ENCODE measurements at regions of chr1 and their contacts with region 1.

Region 1: DNA sequence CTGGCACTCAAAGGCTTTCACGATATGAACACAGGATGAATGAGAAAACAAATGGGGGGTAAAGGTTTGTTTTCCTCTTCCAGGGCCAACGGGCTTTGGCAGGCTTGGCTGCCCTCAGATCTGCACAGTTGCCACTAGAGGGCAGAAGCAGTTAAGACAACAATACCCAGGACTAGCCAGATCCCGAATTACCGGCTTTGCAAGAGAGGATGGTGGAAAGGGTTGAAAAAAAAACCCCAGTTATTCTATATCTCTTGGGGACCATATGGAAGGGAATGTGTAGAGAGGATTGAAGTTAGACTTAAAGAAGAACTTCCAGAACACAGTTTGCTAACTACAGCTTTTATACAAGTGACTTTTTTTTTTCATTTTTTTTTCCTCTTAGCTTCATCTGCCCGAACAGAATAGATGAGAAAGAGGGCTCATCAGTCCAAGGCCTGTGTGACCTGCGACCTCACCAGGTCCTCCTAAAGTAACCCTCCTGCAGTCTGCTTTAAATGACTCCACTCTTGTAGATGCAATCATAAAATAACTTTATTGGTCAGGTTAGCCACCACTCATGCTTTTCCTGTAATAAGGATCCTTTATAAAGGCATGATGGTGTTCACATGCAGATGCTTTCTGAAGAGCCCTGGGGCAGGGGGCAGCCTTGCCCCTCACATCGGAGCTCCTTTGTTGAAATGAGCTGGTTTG is 10.7 kb downstream of the FMOD start:
- DNase-seq: peak; percentile 79 to 92
- ATAC-seq: peak; percentile 79 to 89; a peak in 5 of 6 replicates
- H3K4me3 ChIP-seq: no peak overlapping the region
- H3K27ac ChIP-seq: no peak overlapping the region
- H3K4me1 ChIP-seq: no peaks in the 10 kb centered on the region
- CTCF ChIP-seq: peak; percentile 90
- EP300 ChIP-seq: no peak
- POLR2A ChIP-seq: no peak
- RAD21 ChIP-seq: peak; percentile 89 to 91

Region 2: DNA sequence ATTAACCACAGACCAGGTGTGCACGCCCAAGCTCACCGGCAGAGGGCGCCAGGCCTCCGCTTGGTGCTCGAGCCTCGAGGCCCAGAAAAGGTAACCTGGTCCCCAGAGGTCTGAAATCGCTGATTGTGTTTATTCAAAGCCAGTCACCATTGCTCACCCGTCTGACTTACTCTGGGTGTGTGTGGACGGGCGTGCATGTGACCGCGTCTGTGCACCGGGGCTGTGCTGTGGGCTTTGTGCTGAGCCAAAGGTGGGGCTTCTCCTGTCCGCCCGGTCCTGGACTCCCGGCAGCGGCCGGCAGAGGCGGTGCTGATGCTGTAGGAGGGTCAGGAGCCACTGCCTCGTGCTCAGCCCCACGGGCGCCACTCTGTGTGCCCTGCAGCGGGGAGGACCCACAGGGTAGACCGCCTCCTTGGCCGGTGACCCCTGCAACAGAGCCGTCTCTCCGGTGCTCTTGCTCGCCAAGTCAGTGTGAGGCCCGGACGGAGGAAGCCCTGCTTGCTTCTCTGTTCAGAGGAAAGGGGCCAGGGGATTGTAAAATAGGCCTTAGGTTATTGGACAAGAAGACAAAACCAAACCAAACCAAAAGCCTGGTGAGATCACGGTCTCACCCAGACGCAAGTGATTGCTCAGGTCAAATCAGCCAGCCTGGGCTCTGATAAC is 66.9 kb before region 1 on chr1:
- CTCF ChIA-PET with region 1: interaction called, 510 read pairs
- POLR2A ChIA-PET with region 1: no interaction called
- DNase-seq: peak; percentile 73 to 82
- ATAC-seq: peak; percentile 73 to 88
- H3K4me3 ChIP-seq: no peak overlapping the region
- H3K27ac ChIP-seq: peak overlapping the region; percentile 29 to 67; a peak in 4 of 6 replicates
- H3K4me1 ChIP-seq: peaks cover 9% of the 10 kb centered on the region
- CTCF ChIP-seq: peak; percentile 97
- EP300 ChIP-seq: no peak
- POLR2A ChIP-seq: no peak
- RAD21 ChIP-seq: peak; percentile 93 to 95

Region 3: GRCh38 chr1:203320591-203321272 is 19.5 kb before region 1 on chr1:
- CTCF ChIA-PET with region 1: interaction called, 77 read pairs
- POLR2A ChIA-PET with region 1: no interaction called
- DNase-seq: no peak
- ATAC-seq: no peak
- H3K4me3 ChIP-seq: no peak overlapping the region
- H3K27ac ChIP-seq: no peak overlapping the region
- H3K4me1 ChIP-seq: no peaks in the 10 kb centered on the region
- CTCF ChIP-seq: no peak
- EP300 ChIP-seq: no peak
- POLR2A ChIP-seq: no peak
- RAD21 ChIP-seq: no peak

Region 4: GRCh38 chr1:203351037-203352013 is 11.1 kb after region 1 on chr1 and contains the start of gene FMOD:
- CTCF ChIA-PET with region 1: interaction called, 223 read pairs
- POLR2A ChIA-PET with region 1: no interaction called
- DNase-seq: no peak
- ATAC-seq: peak; percentile 62 to 74; a peak in 3 of 6 replicates
- H3K4me3 ChIP-seq: no peak within 1 kb of the TSS
- H3K27ac ChIP-seq: no peak within 1 kb of the TSS
- H3K4me1 ChIP-seq: no peaks in the 10 kb centered on the region
- CTCF ChIP-seq: no peak
- EP300 ChIP-seq: no peak
- POLR2A ChIP-seq: no peak
- RAD21 ChIP-seq: no peak
- polyA plus RNA-seq, gene FMOD: 0.03 and 0.04 TPM in 2 replicates

Region 5: GRCh38 chr1:203440771-203441170 is 100.5 kb after region 1 on chr1:
- CTCF ChIA-PET with region 1: interaction called, 137 read pairs
- POLR2A ChIA-PET with region 1: no interaction called
- DNase-seq: peak in 1 of 2 experiments; percentile 39
- ATAC-seq: peak; percentile 84 to 90; a peak in 5 of 6 replicates
- H3K4me3 ChIP-seq: no peak overlapping the region
- H3K27ac ChIP-seq: no peak overlapping the region
- H3K4me1 ChIP-seq: no peaks in the 10 kb centered on the region
- CTCF ChIP-seq: peak; percentile 28; the same call in 2 of the 3 replicates
- EP300 ChIP-seq: no peak
- POLR2A ChIP-seq: no peak
- RAD21 ChIP-seq: peak; percentile 59 to 61

Region 6: GRCh38 chr1:203480525-203481084 is 140.3 kb after region 1 on chr1:
- CTCF ChIA-PET with region 1: interaction called, 352 read pairs
- POLR2A ChIA-PET with region 1: no interaction called
- DNase-seq: peak; percentile 44 to 63
- ATAC-seq: peak; percentile 44 to 74; a peak in 3 of 6 replicates
- H3K4me3 ChIP-seq: no peak overlapping the region
- H3K27ac ChIP-seq: peak overlapping the region in 1 of 2 experiments; percentile 50; a peak in 2 of 6 replicates
- H3K4me1 ChIP-seq: peaks cover 13% of the 10 kb centered on the region
- CTCF ChIP-seq: no peak
- EP300 ChIP-seq: no peak
- POLR2A ChIP-seq: no peak
- RAD21 ChIP-seq: no peak

Region 7: DNA sequence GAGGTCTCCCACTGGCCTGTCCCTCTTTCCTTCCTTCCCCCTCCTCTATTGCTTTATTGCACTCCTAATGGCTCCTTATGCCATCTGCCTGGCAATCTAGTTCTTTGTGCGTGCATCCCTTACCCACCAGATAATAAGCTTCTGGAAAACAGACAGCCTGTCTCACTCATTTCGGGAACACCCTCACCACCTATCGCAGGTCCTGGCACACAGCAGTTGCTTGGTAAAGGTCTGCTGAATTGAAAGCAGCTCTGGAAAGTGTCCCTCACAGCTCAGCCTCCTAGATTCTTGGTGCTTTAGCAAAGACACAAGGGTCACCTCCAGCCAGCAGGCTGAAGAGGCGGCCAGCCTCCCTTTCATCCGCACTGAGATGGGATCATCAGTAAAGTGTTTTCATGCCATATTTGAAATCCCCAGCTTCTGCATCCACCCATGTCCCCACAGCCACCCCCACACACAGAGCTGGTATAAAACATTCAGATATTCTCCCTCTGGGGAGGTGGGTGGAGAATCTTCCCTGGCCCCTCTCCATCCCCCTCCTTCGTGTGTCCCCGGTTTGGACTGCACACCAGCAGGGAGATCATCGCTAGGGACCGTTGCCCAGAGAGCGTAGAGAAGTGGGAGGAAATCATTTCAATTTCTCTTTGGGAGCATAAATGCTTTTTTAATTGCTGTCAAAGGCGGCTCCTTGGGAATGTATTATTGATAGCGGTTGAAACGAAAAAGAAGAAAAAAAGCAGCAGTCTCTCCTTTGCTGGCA is 257.3 kb after region 1 on chr1:
- CTCF ChIA-PET with region 1: no interaction called
- POLR2A ChIA-PET with region 1: no interaction called
- DNase-seq: no peak
- ATAC-seq: no peak
- H3K4me3 ChIP-seq: no peak overlapping the region
- H3K27ac ChIP-seq: no peak overlapping the region
- H3K4me1 ChIP-seq: no peaks in the 10 kb centered on the region
- CTCF ChIP-seq: no peak
- EP300 ChIP-seq: no peak
- POLR2A ChIP-seq: no peak
- RAD21 ChIP-seq: no peak

Region 8: DNA sequence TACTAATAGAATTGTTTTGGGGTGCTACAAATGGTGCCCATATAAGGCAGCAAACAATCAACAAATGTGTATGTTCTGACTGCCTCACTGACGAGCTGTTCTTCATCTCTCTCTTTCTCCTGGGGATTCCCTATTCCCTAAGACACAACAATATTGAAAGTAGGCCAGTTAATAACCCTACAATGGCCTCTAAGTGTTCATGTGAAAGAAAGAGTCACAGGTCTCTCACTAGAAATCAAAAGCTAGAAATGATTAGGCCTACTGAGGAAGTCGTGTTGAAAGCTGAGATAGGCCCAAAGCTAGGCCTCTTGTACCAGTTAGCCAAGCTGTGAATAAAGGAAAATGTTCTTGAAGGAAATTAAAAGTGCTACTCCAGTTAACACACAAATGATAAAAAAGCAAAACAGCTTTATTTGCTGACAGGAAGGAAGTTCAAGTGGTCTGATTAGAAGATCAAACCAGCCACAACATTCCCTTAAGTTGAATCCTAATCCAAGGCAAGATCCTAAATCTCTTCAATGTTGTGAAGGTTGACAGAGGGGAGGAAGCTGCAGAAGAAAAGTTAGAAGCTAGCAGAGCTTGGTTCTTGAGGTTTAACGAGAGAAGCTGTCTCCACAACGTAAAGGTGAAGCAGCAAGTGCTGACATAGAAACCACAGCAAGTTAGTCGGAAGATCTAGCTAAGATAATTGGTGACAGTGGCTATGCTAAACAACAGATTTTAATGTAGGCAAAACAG is 312.6 kb after region 1 on chr1:
- CTCF ChIA-PET with region 1: no interaction called
- POLR2A ChIA-PET with region 1: no interaction called
- DNase-seq: no peak
- ATAC-seq: no peak
- H3K4me3 ChIP-seq: no peak overlapping the region
- H3K27ac ChIP-seq: no peak overlapping the region
- H3K4me1 ChIP-seq: 0 out of 3 replicates have a peak, but pooled peaks cover 3% of the 10 kb centered on the region
- CTCF ChIP-seq: no peak
- EP300 ChIP-seq: no peak
- POLR2A ChIP-seq: no peak
- RAD21 ChIP-seq: no peak